ENCODE measurements at regions of chr9 and their contacts with region 1.

Region 1: DNA sequence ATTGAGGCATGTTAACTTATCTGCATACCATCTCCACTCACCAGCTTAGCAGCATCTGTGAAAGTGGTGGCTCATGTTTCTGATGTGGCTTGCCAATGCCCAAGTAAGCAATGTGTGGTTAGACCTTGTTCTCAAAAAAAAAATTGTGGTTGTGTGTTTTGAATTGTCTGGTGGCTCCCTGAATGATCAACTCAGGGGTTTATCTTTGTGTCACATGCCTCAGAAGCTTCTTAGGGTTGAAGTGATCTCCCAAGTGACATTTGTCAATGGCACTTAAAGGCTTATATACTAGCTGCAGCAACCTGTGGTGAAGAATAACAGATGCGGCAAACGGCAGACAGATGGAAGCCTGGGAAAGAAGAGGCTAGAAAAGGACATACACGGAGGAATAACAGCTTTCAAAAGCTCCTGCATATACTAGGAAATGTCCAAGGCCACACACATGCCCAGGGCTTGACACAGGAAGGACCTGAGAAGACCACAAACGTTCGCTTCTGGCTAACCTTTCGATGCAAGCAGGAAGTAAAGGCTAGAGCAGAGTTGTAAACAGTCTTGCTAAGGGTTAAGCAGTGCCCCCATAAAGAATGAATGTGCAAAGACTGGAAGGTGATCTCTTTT is 42.2 kb upstream of the FSD1L start:
- DNase-seq: peak; percentile 25 to 90 (median 57)
- ATAC-seq: peak; percentile 89
- H3K4me3 ChIP-seq: peak overlapping the region; percentile 3 to 12
- H3K4me3 Mint-ChIP-seq: peak overlapping the region; percentile 63
- H3K27ac ChIP-seq: no peak overlapping the region
- H3K27ac Mint-ChIP-seq: peak overlapping the region; percentile 74
- H3K4me1 ChIP-seq: peaks cover 23% of the 10 kb centered on the region
- H3K4me1 Mint-ChIP-seq: peaks cover 30% of the 10 kb centered on the region
- H3K27me3 ChIP-seq: peaks cover 17 to 30% of the 10 kb centered on the region in 2 experiments
- H3K27me3 Mint-ChIP-seq: peaks cover 48% of the 10 kb centered on the region
- CTCF ChIP-seq: no peak

Region 2: DNA sequence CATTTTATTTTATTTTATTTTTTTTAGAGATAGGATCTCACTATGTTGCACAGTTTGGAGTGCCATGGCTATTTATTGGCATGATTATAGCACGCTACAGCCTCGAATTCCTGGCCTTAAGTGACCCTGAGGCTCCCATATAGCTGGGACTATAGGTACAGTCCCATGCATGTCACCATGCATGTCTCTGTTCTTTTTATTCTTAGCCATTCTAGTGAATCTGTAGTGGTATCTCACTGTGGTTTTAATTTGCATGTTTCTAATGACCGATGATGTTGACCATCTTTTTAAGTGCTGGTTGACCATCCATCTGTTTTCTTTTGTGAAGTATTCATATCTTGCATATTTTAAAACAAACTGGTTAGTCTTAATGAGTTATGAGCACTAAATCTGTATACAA is 85.1 kb before region 1 on chr9:
- CTCF ChIA-PET with region 1: no interaction called
- POLR2A ChIA-PET with region 1: no interaction called
- intact Hi-C with region 1: no loop called
- DNase-seq: no peak
- ATAC-seq: no peak
- H3K4me3 ChIP-seq: no peak overlapping the region
- H3K4me3 Mint-ChIP-seq: no peak overlapping the region
- H3K27ac ChIP-seq: no peak overlapping the region
- H3K27ac Mint-ChIP-seq: no peak overlapping the region
- H3K4me1 ChIP-seq: no peaks in the 10 kb centered on the region
- H3K4me1 Mint-ChIP-seq: no peaks in the 10 kb centered on the region
- H3K27me3 ChIP-seq: no peaks in the 10 kb centered on the region
- H3K27me3 Mint-ChIP-seq: no peaks in the 10 kb centered on the region
- CTCF ChIP-seq: no peak

Region 3: GRCh38 chr9:105341434-105342144 is 64.0 kb before region 1 on chr9:
- CTCF ChIA-PET with region 1: no interaction called
- POLR2A ChIA-PET with region 1: no interaction called
- intact Hi-C with region 1: no loop called
- DNase-seq: peak in 1 of 9 experiments; percentile 13
- ATAC-seq: no peak
- H3K4me3 ChIP-seq: no peak overlapping the region
- H3K4me3 Mint-ChIP-seq: peak overlapping the region; percentile 24
- H3K27ac ChIP-seq: no peak overlapping the region
- H3K27ac Mint-ChIP-seq: no peak overlapping the region
- H3K4me1 ChIP-seq: no peaks in the 10 kb centered on the region
- H3K4me1 Mint-ChIP-seq: peaks cover 7% of the 10 kb centered on the region
- H3K27me3 ChIP-seq: no peaks in the 10 kb centered on the region
- H3K27me3 Mint-ChIP-seq: no peaks in the 10 kb centered on the region
- CTCF ChIP-seq: no peak

Region 4: GRCh38 chr9:105355781-105356180 is 49.8 kb before region 1 on chr9:
- CTCF ChIA-PET with region 1: no interaction called
- POLR2A ChIA-PET with region 1: no interaction called
- intact Hi-C with region 1: no loop called
- DNase-seq: peak in 3 of 9 experiments; percentile 3 to 33 (median 20)
- ATAC-seq: peak; percentile 86
- H3K4me3 ChIP-seq: no peak overlapping the region
- H3K4me3 Mint-ChIP-seq: no peak overlapping the region
- H3K27ac ChIP-seq: no peak overlapping the region
- H3K27ac Mint-ChIP-seq: no peak overlapping the region
- H3K4me1 ChIP-seq: no peaks in the 10 kb centered on the region
- H3K4me1 Mint-ChIP-seq: peaks cover 2% of the 10 kb centered on the region
- H3K27me3 ChIP-seq: no peaks in the 10 kb centered on the region
- H3K27me3 Mint-ChIP-seq: no peaks in the 10 kb centered on the region
- CTCF ChIP-seq: no peak

Region 5: DNA sequence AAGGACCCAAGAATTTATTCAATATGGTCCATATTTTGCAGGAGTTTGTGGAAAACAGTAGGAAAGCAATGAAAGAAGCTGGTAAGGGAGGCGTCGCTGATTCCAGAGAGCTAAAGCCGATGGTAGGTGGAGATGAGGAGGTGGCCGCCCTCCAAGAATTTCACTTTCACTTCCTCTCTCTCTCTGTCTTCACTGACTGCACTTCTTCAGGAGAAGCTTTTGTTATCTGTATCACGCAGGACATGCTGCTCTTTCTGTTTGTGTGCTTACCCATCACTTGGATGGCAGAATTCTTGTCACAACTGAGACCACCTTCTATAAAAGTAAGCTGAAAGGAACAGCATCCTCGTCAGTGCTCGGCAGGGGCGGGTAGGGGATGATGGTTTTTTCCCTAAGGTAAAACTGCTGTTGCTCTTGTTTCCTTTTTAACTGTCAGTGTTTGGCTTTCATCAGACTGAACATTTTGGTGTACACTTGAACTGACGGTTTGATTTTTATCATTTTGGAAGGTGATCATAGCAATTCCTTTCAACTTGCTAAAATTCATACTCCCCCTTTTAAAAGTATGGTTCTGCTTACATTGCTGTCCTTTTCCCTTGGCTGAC is 20.1 kb before region 1 on chr9:
- CTCF ChIA-PET with region 1: no interaction called
- POLR2A ChIA-PET with region 1: interaction called, 3 read pairs
- intact Hi-C with region 1: loop called in 1 of 2 experiments (anchors 2 kb)
- DNase-seq: peak in 6 of 9 experiments; percentile 14 to 62 (median 30)
- ATAC-seq: peak; percentile 87
- H3K4me3 ChIP-seq: peak overlapping the region; percentile 61 to 68
- H3K4me3 Mint-ChIP-seq: peak overlapping the region; percentile 93
- H3K27ac ChIP-seq: peak overlapping the region in 1 of 2 experiments; percentile 27
- H3K27ac Mint-ChIP-seq: peak overlapping the region; percentile 85
- H3K4me1 ChIP-seq: peaks cover 12% of the 10 kb centered on the region
- H3K4me1 Mint-ChIP-seq: peaks cover 13% of the 10 kb centered on the region
- H3K27me3 ChIP-seq: no peaks in the 10 kb centered on the region
- H3K27me3 Mint-ChIP-seq: no peaks in the 10 kb centered on the region
- CTCF ChIP-seq: no peak

Region 6: DNA sequence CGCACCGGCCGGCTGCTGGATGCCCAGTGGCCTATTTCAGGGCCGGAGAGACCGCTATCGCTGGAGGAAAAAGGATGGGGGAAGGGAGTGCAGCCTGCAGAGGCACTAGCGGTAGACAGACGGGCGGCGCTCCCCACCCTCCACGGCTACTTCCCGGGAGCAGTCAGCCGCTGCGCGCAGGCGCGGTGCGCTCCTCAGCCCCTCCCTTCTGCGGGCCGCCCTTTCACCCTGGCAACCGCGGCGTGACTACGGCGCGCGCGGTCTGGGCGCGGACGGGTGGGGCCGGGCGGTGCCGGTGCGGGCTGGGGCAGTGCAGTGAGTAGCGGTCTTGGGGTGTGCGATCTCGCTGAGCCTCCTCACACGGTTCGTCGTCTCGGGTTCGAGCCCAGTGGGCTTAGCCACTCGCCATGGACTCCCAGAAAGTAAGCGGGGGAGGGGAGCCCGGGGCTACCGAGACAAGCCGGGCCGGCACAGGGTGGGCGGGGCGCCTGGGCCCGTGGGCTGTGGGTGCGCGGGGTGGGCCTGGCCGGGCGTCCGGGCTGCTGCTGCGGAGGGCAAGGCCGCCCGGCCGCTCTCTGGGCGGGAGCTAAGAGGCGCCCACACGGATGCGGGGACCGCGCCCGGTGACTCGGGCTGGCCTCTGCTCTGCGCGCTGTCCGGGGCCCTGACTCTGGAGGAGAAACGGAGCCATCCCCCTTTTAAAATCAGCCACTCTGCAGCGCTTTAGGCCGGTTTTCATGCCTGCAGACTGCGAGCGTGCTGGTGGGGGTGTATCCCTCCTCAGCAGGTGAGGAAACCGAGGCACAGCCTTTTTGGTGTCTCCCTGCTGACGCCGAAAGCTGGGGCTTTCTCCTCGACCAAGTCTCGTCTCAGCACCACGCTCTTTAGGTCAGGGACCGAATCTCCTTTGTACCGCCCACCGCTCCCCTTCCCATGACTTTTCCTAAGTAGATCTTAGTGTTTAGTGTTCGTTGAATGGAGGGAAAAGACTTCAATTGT is 42.5 kb after region 1 on chr9 and contains the start of gene FSD1L:
- CTCF ChIA-PET with region 1: no interaction called
- POLR2A ChIA-PET with region 1: no interaction called
- intact Hi-C with region 1: loop called in 1 of 2 experiments (anchors 2 kb)
- DNase-seq: peak; percentile 45 to 89 (median 74)
- ATAC-seq: peak; percentile 90
- H3K4me3 ChIP-seq: peak within 1 kb of the TSS; percentile 62 to 76
- H3K4me3 Mint-ChIP-seq: peak within 1 kb of the TSS; percentile 81
- H3K27ac ChIP-seq: no peak within 1 kb of the TSS
- H3K27ac Mint-ChIP-seq: no peak within 1 kb of the TSS
- H3K4me1 ChIP-seq: no peaks in the 10 kb centered on the region
- H3K4me1 Mint-ChIP-seq: peaks cover 8% of the 10 kb centered on the region
- H3K27me3 ChIP-seq: no peaks in the 10 kb centered on the region
- H3K27me3 Mint-ChIP-seq: no peaks in the 10 kb centered on the region
- CTCF ChIP-seq: no peak
- total RNA-seq, gene FSD1L: 0.24 to 0.33 TPM

Measured in CD8-positive, alpha-beta T cell (primary cell).